ENCODE measurements at regions of chr1 and their contacts with region 1.

Region 1: DNA sequence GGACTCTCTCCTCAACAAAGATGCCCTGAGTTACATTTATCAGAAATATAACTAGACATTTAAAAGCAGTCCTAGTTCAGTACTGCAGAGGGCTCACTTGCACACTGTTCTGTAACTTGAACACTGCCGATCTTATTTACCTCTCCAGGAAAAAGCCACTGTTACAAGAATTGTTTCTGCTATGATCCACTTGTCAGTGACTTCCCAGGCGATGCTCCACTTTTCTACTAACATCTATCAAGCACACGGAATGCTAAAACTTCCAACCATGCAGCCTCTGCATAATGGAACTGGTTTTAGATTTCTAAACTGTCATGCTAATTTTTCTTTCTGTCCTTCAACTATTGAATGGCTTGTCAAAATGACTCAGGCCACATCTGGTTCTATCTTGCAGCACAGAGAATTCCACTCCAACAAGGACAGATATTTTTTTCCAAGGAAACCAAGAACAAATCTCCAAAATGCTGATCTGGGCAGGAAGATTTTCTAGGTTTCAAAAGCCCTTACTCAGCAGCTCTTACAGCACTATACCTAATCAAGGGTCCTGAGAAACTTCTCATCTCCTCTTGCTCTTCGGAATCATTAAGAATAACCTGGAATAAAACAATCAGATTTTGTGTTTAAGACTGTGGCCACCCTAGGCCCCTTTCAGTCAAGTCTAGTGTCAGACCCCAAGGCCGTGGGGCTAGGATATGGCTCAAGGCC is 9.9 kb downstream of the SEC16B start:
- DNase-seq: peak; percentile 26
- H3K4me3 ChIP-seq: no peak overlapping the region
- H3K27ac ChIP-seq: no peak overlapping the region
- H3K4me1 ChIP-seq: no peaks in the 10 kb centered on the region
- H3K27me3 ChIP-seq: no peaks in the 10 kb centered on the region
- CTCF ChIP-seq: peak; percentile 12 to 17
- POLR2A ChIP-seq: no peak

Region 2: DNA sequence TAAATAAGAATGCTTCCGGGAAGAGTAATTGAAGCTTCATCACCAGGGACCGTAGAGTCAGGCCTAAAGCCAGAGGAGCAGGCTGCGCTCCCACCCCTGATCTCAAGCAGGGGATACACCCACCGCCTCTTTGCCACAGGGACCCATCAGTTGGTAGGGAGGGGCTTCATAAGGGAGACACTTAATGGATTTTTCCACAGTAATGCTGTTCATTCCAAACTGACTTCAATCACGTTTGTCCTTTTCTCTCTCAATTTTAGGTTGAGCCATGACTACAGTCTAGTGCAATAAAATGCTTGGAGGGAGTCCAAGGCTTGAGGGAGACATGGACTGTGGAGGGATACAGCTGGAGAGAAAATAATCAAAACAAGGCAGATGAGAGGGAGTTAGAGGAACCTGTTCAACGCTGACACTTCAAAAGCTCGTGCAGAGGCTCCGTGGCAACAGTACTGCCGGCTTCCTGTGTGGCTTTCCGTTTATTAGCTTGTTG is 101.6 kb before region 1 on chr1:
- CTCF ChIA-PET with region 1: no interaction called
- POLR2A ChIA-PET with region 1: no interaction called
- dilution Hi-C with region 1: no loop called
- intact Hi-C with region 1: no loop called
- DNase-seq: peak; percentile 40
- H3K4me3 ChIP-seq: no peak overlapping the region
- H3K27ac ChIP-seq: no peak overlapping the region
- H3K4me1 ChIP-seq: no peaks in the 10 kb centered on the region
- H3K27me3 ChIP-seq: no peaks in the 10 kb centered on the region
- CTCF ChIP-seq: no peak
- POLR2A ChIP-seq: no peak

Region 3: GRCh38 chr1:178282949-178283367 is 323.0 kb after region 1 on chr1:
- CTCF ChIA-PET with region 1: interaction called, 11 read pairs
- POLR2A ChIA-PET with region 1: no interaction called
- dilution Hi-C with region 1: no loop called
- intact Hi-C with region 1: no loop called
- DNase-seq: peak; percentile 69
- H3K4me3 ChIP-seq: no peak overlapping the region
- H3K27ac ChIP-seq: no peak overlapping the region
- H3K4me1 ChIP-seq: no peaks in the 10 kb centered on the region
- H3K27me3 ChIP-seq: no peaks in the 10 kb centered on the region
- CTCF ChIP-seq: peak; percentile 28 to 34
- POLR2A ChIP-seq: no peak